PC-9 (cell line): ENCODE measurements at regions of chr12 and their contacts with region 1.

Region 1: GRCh38 chr12:111819191-111820150 is 22.6 kb upstream of the MAPKAPK5 start:
- DNase-seq: peak; percentile 42 to 86
- H3K4me3 ChIP-seq: no peak overlapping the region
- H3K27ac ChIP-seq: 0 out of 2 replicates have a peak overlapping the region, but pooled peaks have one; percentile 23
- H3K4me1 ChIP-seq: peaks cover 23% of the 10 kb centered on the region
- H3K27me3 ChIP-seq: peaks cover 19% of the 10 kb centered on the region; the same call in 1 of the 2 replicates
- CTCF ChIP-seq: no peak

Region 2: GRCh38 chr12:111214401-111214800 is 605.1 kb before region 1 on chr12:
- CTCF ChIA-PET with region 1: no interaction called
- POLR2A ChIA-PET with region 1: interaction called, 13 read pairs
- intact Hi-C with region 1: no loop called
- DNase-seq: no peak
- H3K4me3 ChIP-seq: no peak overlapping the region
- H3K27ac ChIP-seq: no peak overlapping the region
- H3K4me1 ChIP-seq: no peaks in the 10 kb centered on the region
- H3K27me3 ChIP-seq: peaks cover 100% of the 10 kb centered on the region
- CTCF ChIP-seq: no peak

Region 3: GRCh38 chr12:112116232-112117060 is 297.0 kb after region 1 on chr12:
- CTCF ChIA-PET with region 1: no interaction called
- POLR2A ChIA-PET with region 1: no interaction called
- intact Hi-C with region 1: no loop called
- DNase-seq: peak; percentile 32 to 81
- H3K4me3 ChIP-seq: peak overlapping the region; percentile 1; the same call in 1 of the 2 replicates
- H3K27ac ChIP-seq: peak overlapping the region; percentile 92
- H3K4me1 ChIP-seq: peaks cover 77% of the 10 kb centered on the region
- H3K27me3 ChIP-seq: no peaks in the 10 kb centered on the region
- CTCF ChIP-seq: no peak